Activated CD4-positive, alpha-beta T cell treated with anti-CD3 and anti-CD28 coated beads, Interleukin-2, amount 10 ng/mL, durations not matched to agents 24 days and 14 days (primary cell): ENCODE measurements at regions of chr6 and their contacts with region 1.

Region 1: DNA sequence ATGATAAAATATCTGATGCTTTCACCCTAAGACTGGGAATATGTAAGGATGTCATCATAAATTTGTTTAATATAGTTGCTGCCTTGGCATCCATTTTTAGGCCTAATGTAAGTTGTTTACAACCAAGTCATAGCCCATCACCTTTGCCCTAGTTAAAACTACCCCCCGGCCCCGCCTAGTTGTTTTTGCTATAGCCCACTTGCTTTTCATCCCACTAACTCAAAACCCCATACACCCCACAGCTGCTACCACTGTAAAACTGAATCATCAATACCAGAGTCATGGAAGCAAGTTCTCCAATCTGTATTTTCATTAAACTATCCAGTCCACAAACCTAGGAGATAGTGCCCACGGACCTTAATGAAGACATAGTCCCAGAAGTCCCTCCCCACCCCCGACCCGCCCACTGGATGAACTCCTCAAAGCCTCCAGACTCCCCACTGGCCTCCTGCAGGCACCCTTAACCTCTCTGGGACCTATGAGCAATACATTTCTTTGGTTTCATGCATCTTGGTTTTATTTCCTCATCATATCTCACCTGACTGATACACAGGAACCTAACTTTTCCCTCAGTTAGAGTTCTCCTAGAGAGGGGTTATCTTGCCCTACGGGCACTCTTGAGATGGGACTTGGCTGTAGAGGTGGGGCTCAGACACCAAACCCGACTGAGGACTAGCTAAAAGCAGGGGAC is 12.5 kb upstream of the ZDHHC14 start:
- DNase-seq: no peak
- H3K4me3 Mint-ChIP-seq: no peak overlapping the region
- H3K27ac Mint-ChIP-seq: no peak overlapping the region
- H3K4me1 Mint-ChIP-seq: peaks cover 16% of the 10 kb centered on the region
- H3K27me3 Mint-ChIP-seq: peaks cover 59% of the 10 kb centered on the region

Region 2: GRCh38 chr6:157323255-157323965 is 45.1 kb before region 1 on chr6 and contains the start of gene TMEM242:
- intact Hi-C with region 1: loop called (anchors 2 kb)
- DNase-seq: peak; percentile 97
- H3K4me3 Mint-ChIP-seq: peak within 1 kb of the TSS; percentile 94
- H3K27ac Mint-ChIP-seq: peak within 1 kb of the TSS; percentile 92
- H3K4me1 Mint-ChIP-seq: peaks cover 39% of the 10 kb centered on the region
- H3K27me3 Mint-ChIP-seq: peaks cover 21% of the 10 kb centered on the region
- total RNA-seq, gene TMEM242: 10.1 and 10.7 TPM in 2 replicates